ENCODE measurements at regions of chr11 and their contacts with region 1.

Region 1: DNA sequence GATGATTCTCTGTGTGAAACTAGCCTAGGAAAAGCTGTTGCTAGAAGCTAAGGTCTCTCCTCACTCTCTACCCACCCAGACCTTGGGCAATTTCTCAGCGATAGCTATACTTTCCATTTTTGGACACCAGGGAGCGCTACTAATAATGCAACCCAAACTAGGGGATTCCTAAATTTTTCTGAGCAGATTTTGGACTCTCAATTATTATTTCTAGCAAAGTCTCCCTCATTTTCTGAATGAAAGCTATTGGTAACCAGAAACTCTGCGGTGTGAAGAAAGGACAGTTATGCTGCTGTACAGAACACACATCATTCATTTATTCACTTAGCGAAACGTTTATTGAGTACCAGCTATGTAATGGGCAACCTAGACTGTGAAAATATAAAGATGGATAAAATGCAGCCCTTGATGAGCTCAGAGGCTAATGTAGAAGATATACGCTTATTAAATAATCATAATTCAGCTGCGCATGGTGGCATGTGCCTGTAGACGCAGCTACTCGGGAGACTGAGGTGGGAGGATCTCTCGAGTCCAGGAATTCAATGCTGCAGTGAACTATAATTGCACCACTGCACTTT is 6.1 kb upstream of the STIM1 start:
- DNase-seq: peak; percentile 61
- ATAC-seq: peak; percentile 58
- H3K4me3 Mint-ChIP-seq: no peak overlapping the region
- H3K27ac Mint-ChIP-seq: peak overlapping the region; percentile 35
- H3K4me1 Mint-ChIP-seq: peaks cover 51% of the 10 kb centered on the region
- H3K27me3 Mint-ChIP-seq: no peaks in the 10 kb centered on the region
- CTCF ChIP-seq: peak; percentile 79

Region 2: GRCh38 chr11:3927133-3927796 is 77.9 kb after region 1 on chr11:
- CTCF ChIA-PET with region 1: interaction called, 24 read pairs
- POLR2A ChIA-PET with region 1: interaction called, 6 read pairs
- intact Hi-C with region 1: no loop called
- DNase-seq: no peak
- ATAC-seq: no peak
- H3K4me3 Mint-ChIP-seq: no peak overlapping the region
- H3K27ac Mint-ChIP-seq: no peak overlapping the region
- H3K4me1 Mint-ChIP-seq: peaks cover 36% of the 10 kb centered on the region
- H3K27me3 Mint-ChIP-seq: no peaks in the 10 kb centered on the region
- CTCF ChIP-seq: no peak

Region 3: GRCh38 chr11:3947061-3947460 is 97.7 kb after region 1 on chr11:
- CTCF ChIA-PET with region 1: interaction called, 34 read pairs
- POLR2A ChIA-PET with region 1: interaction called, 16 read pairs
- intact Hi-C with region 1: no loop called
- DNase-seq: peak; percentile 70
- ATAC-seq: peak; percentile 75
- H3K4me3 Mint-ChIP-seq: peak overlapping the region; percentile 37
- H3K27ac Mint-ChIP-seq: peak overlapping the region; percentile 93
- H3K4me1 Mint-ChIP-seq: peaks cover 93% of the 10 kb centered on the region
- H3K27me3 Mint-ChIP-seq: no peaks in the 10 kb centered on the region
- CTCF ChIP-seq: no peak

Region 4: GRCh38 chr11:3959015-3959919 is 109.9 kb after region 1 on chr11:
- CTCF ChIA-PET with region 1: interaction called, 36 read pairs
- POLR2A ChIA-PET with region 1: interaction called, 11 read pairs
- intact Hi-C with region 1: no loop called
- DNase-seq: no peak
- ATAC-seq: peak; percentile 64
- H3K4me3 Mint-ChIP-seq: no peak overlapping the region
- H3K27ac Mint-ChIP-seq: no peak overlapping the region
- H3K4me1 Mint-ChIP-seq: peaks cover 77% of the 10 kb centered on the region
- H3K27me3 Mint-ChIP-seq: no peaks in the 10 kb centered on the region
- CTCF ChIP-seq: peak; percentile 11

Region 5: GRCh38 chr11:3977078-3977477 is 127.7 kb after region 1 on chr11:
- CTCF ChIA-PET with region 1: interaction called, 42 read pairs
- POLR2A ChIA-PET with region 1: no interaction called
- intact Hi-C with region 1: no loop called
- DNase-seq: no peak
- ATAC-seq: peak; percentile 34
- H3K4me3 Mint-ChIP-seq: no peak overlapping the region
- H3K27ac Mint-ChIP-seq: no peak overlapping the region
- H3K4me1 Mint-ChIP-seq: peaks cover 54% of the 10 kb centered on the region
- H3K27me3 Mint-ChIP-seq: no peaks in the 10 kb centered on the region
- CTCF ChIP-seq: no peak

Region 6: DNA sequence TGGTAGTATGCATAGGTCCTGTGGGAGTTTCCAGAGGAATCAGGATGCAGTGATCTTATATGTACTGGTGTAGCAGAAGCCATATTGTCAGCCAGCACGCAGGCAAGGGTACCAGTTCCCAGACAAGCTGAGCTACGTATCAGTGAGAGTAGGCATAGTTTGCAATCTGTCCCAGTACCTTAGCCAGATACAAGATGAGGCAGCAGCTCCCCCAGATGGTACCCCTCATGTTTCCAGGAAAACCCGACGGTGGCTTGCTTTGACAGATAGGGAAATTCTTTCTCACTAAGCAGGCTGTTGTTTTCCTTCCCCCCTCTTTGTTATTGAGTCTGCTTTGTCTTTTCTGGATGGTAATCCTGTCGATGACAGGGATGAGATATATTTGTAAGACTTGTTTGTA is 135.5 kb after region 1 on chr11:
- CTCF ChIA-PET with region 1: interaction called, 50 read pairs
- POLR2A ChIA-PET with region 1: interaction called, 5 read pairs
- intact Hi-C with region 1: loop called (anchors 5 kb)
- DNase-seq: peak; percentile 79
- ATAC-seq: peak; percentile 83
- H3K4me3 Mint-ChIP-seq: no peak overlapping the region
- H3K27ac Mint-ChIP-seq: peak overlapping the region; percentile 77
- H3K4me1 Mint-ChIP-seq: peaks cover 79% of the 10 kb centered on the region
- H3K27me3 Mint-ChIP-seq: no peaks in the 10 kb centered on the region
- CTCF ChIP-seq: peak; percentile 31

Region 7: GRCh38 chr11:4060182-4060923 is 211.0 kb after region 1 on chr11:
- CTCF ChIA-PET with region 1: interaction called, 775 read pairs
- POLR2A ChIA-PET with region 1: interaction called, 11 read pairs
- intact Hi-C with region 1: no loop called
- DNase-seq: no peak
- ATAC-seq: no peak
- H3K4me3 Mint-ChIP-seq: no peak overlapping the region
- H3K27ac Mint-ChIP-seq: no peak overlapping the region
- H3K4me1 Mint-ChIP-seq: peaks cover 44% of the 10 kb centered on the region
- H3K27me3 Mint-ChIP-seq: no peaks in the 10 kb centered on the region
- CTCF ChIP-seq: no peak

Measured in activated CD8-positive, alpha-beta T cell treated with anti-CD3 and anti-CD28 coated beads for 36 hours (primary cell).